Motor neuron (in vitro differentiated cells): ENCODE measurements at regions of chr4 and their contacts with region 1.

Region 1: GRCh38 chr4:15231265-15232091 is 196.4 kb upstream of the C1QTNF7 start:
- ATAC-seq: peak; percentile 58 to 97 (median 70)
- H3K4me3 ChIP-seq: no peak overlapping the region
- H3K27ac ChIP-seq: no peak overlapping the region
- H3K4me1 ChIP-seq: no peaks in the 10 kb centered on the region

Region 2: DNA sequence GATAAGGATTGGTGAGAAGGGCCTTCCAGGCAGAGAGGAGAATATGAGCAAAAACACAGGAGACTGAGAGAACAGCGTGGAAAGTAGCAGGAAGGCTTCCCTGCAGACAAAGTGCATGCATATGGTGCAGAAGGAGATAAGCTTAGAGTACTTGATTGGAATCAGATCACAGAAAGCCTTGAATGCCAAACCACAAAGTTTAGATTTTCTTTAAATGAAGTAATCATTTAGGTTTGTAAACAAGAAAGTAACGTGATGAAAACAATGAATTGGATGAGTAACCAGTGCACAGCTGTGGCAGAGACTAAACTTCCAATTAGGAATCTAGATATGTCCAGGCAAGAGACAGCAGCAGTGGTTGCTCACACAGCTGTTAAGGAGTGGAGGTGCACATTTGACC is 112.6 kb after region 1 on chr4:
- in situ Hi-C with region 1: no loop called
- ATAC-seq: peak in 2 of 8 experiments; percentile 68 to 89
- H3K4me3 ChIP-seq: no peak overlapping the region
- H3K27ac ChIP-seq: no peak overlapping the region
- H3K4me1 ChIP-seq: peaks cover 2 to 8% of the 10 kb centered on the region in 2 donors

Region 3: DNA sequence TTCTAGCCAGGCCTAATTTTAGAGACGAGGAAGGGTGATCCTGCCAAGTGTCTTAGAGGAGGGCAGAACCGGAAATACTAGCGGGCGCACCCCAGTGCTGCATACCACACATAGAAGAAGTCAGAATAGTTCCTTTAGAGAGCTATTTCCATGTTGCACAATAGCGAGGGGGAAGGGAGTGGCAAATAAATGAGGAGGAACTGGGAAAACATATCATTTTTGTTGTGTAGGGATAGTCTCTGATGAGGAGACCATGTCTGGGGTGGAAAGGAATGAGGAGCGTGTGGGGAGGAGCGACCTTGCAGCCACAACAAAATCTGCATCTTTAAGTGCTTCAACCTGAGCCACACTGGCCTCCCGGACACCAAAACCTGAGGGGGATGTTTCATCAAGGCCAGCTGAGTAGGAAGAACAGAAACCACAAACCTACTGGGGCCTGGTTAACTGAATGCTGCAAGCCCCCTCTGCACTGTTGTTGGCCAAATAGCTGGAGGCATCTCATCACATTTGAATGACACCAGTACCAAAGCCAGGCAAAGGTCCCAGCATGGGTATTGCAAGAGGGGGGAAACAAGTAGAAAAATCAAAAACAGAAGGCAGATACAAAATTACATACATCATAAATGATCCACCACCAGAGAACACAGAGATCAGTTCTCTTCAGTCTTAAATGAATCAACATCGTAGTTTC is 169.6 kb after region 1 on chr4:
- in situ Hi-C with region 1: loop called in 1 of 9 experiments (anchors 25 kb)
- ATAC-seq: peak in 3 of 8 experiments; percentile 73 to 92 (median 92)
- H3K4me3 ChIP-seq: no peak overlapping the region
- H3K27ac ChIP-seq: no peak overlapping the region
- H3K4me1 ChIP-seq: peaks cover 2 to 15% of the 10 kb centered on the region in 2 donors

Region 4: DNA sequence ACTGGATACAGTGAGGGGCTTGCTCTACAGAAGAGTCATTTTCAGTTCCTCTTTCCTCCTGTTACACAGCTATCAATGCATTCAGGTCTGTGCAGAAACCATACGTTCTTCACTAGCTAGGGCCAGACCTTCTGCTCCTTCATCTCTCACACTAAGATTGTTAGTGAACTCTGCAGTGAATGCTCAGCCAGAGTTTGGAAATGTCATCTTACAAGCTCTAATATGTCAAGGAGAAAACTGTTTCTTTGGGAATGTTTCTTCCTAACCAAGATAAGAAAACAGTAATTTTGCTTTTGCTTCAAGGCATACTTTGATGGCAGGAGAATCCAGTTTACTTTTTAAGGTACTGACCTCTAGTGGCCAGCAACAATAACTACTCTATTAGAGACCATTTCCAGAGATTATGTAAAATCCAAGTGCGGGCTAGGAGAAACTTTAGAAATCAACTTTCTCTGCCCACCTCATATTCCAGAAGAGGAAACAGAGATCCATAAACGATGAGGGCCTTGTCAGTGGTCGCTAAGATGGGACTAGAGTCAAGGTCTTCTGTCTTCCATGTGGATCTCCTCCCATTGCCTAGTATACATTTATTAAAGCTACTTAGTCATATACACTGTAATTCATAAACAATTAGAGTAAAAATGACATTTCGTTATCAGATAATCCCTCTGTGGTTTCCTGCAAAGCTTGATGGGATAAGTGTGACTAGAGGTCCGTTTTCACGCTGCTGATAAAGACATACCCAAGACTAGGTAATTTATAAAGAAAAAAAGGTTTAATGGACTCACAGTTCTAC is 226.1 kb after region 1 on chr4:
- in situ Hi-C with region 1: loop called in 4 of 9 experiments (anchors 10 to 25 kb)
- ATAC-seq: peak in 7 of 8 experiments; percentile 44 to 92 (median 67)
- H3K4me3 ChIP-seq: no peak overlapping the region
- H3K27ac ChIP-seq: no peak overlapping the region
- H3K4me1 ChIP-seq: peaks cover 0 to 3% of the 10 kb centered on the region in 2 donors

Region 5: DNA sequence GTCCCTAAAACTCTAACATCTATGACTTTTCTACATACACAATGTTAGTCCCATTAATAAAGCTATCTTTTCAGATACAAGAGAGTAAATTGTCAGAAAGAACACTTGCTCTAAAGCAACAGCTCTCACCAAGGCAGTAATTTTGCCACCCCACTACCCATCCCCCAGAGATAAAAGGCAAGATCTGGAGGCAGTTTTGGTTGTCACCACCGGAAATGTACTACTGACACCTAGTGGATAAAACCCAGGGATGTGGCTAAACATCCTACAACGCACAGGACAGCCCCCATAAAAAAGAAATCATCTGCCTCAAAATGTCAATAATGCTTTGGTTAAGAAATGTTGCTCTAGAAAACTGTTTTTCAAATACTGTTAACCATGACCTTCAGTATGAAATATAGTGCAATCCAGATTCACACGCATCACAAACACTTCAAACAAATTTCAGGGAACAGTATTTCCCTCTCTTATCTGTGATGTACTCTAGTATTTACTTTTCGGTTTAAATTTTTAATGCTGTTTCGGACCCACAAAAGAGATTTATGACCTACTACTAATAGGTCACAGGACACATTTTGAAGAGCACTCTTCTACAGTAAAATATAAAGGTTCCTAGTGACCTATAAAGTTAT is 418.6 kb after region 1 on chr4:
- in situ Hi-C with region 1: loop called in 1 of 9 experiments (anchors 25 kb)
- ATAC-seq: peak; percentile 9 to 32 (median 24)
- H3K4me3 ChIP-seq: peak overlapping the region in 1 of 5 donors; percentile 0
- H3K27ac ChIP-seq: no peak overlapping the region
- H3K4me1 ChIP-seq: peaks cover 12 to 38% of the 10 kb centered on the region in 2 donors